CD8-positive, alpha-beta memory T cell (primary cell): ENCODE measurements at regions of chr1 and their contacts with region 1.

Region 1: GRCh38 chr1:28248283-28249012 is 10.9 kb upstream of the SESN2 start:
- DNase-seq: peak; percentile 71 to 85 (median 75)
- H3K4me3 ChIP-seq: peak overlapping the region; percentile 76
- H3K4me3 Mint-ChIP-seq: peak overlapping the region; percentile 50 to 89 (median 84)
- H3K27ac ChIP-seq: peak overlapping the region; percentile 88
- H3K27ac Mint-ChIP-seq: peak overlapping the region; percentile 88 to 99 (median 95)
- H3K4me1 ChIP-seq: peaks cover 54% of the 10 kb centered on the region
- H3K4me1 Mint-ChIP-seq: peaks cover 43 to 53% (median 51%) of the 10 kb centered on the region in 3 donors
- H3K27me3 ChIP-seq: no peaks in the 10 kb centered on the region
- H3K27me3 Mint-ChIP-seq: no peaks in the 10 kb centered on the region

Region 2: DNA sequence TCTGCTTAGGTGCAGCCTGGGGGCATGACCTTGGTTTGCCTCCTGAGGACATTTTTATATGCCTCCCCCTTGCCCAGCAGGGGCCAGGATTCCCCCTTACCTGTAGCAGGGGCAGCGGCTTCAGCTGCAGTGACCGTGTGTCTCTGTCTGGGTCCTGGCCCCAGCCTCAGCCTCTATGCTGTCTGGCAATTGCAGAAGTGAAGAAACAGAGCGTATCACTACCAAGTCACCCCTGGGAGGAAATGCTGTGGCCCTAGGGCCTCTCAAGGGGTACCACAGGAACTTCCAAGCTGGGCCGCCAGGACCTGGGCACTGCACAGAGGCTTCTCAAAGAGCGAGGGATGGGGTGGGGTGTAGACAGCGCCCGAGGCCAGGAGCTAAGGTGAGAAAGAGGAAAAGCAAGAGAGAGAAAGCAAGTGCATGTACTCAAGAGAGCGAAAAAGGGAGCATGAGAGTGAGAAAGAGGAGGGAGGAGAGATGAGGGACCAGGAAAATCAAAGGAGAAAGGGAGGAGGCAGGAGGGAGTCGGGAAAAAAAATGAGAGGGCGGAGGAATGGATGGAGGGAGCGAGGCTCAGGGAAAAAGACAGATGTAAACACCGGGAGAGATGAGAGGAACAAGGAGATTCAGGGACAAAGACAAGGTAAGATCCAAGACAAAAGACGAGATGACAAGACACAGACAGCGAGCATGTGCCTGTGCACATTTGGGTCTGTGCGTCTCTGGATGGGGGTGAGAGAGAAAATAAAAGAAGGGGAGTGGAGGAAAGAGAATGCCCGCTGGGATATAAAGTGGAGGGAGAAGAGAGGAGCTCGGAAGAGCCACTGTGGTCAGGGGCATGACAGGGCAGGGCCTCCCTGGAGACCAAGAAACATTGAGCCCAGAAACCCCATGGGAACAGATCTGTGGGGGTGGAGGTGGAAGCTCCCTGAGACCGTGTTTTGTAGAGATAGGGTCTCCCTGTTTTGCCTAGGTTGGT is 71.7 kb before region 1 on chr1 and contains the start of gene PTAFR:
- CTCF ChIA-PET with region 1: no interaction called
- POLR2A ChIA-PET with region 1: no interaction called
- DNase-seq: no peak
- H3K4me3 ChIP-seq: no peak within 1 kb of the TSS
- H3K4me3 Mint-ChIP-seq: peak within 1 kb of the TSS in 1 of 7 donors; percentile 51
- H3K27ac ChIP-seq: no peak within 1 kb of the TSS
- H3K27ac Mint-ChIP-seq: no peak within 1 kb of the TSS
- H3K4me1 ChIP-seq: peaks cover 26% of the 10 kb centered on the region
- H3K4me1 Mint-ChIP-seq: peaks cover 28 to 40% (median 33%) of the 10 kb centered on the region in 3 donors
- H3K27me3 ChIP-seq: no peaks in the 10 kb centered on the region
- H3K27me3 Mint-ChIP-seq: no peaks in the 10 kb centered on the region
- total RNA-seq, gene PTAFR: 0.58 to 0.59 TPM

Region 3: DNA sequence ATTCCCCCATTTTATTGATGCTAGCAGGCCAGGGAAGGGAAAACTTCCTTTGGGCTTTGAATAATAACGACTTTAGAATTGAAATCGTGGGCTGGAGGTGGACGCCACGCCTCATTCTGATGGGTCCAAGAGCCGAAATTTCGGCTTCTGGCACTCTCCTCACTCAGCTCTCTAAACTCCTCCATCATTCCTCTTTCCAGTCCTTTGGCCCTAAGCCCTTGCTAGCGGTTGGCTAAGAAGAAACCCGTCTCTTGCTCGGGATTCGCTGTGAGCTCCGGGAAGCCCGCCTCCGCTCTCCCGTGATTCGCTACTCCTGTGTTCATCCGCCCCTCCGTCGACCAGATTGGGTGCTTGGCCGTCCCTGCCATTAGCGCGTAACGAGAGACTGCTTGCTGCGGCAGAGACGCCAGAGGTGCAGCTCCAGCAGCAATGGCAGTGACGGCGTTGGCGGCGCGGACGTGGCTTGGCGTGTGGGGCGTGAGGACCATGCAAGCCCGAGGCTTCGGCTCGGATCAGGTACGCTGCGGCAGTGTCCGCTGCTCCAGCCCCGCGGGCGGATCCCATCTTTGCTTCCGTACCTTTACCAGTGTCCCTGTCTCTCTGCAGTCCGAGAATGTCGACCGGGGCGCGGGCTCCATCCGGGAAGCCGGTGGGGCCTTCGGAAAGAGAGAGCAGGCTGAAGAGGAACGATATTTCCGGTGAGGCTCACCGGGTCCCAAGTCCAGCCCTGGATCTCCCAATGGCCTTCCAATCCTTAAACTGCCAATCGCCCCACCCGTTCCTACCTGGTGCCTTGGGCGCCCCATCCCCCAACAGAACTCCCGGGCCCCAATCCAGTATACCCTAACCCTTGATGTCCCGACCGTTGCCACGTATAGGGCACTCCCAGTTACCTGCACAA is 12.4 kb before region 1 on chr1 and contains the start of gene ATP5IF1:
- CTCF ChIA-PET with region 1: interaction called, 38 read pairs
- POLR2A ChIA-PET with region 1: interaction called, 66 read pairs
- DNase-seq: peak; percentile 89 to 96 (median 93)
- H3K4me3 ChIP-seq: peak within 1 kb of the TSS; percentile 55
- H3K4me3 Mint-ChIP-seq: peak within 1 kb of the TSS in 2 of 7 donors; percentile 14 to 66
- H3K27ac ChIP-seq: peak within 1 kb of the TSS; percentile 92
- H3K27ac Mint-ChIP-seq: peak within 1 kb of the TSS in 1 of 8 donors; percentile 17
- H3K4me1 ChIP-seq: peaks cover 33% of the 10 kb centered on the region
- H3K4me1 Mint-ChIP-seq: peaks cover 15 to 34% (median 23%) of the 10 kb centered on the region in 3 donors
- H3K27me3 ChIP-seq: no peaks in the 10 kb centered on the region
- H3K27me3 Mint-ChIP-seq: no peaks in the 10 kb centered on the region
- total RNA-seq, gene ATP5IF1: 135 to 139 TPM

Region 4: GRCh38 chr1:28259307-28260167 is 11.1 kb after region 1 on chr1 and contains the start of gene SESN2:
- CTCF ChIA-PET with region 1: interaction called, 37 read pairs
- POLR2A ChIA-PET with region 1: interaction called, 23 read pairs
- DNase-seq: peak; percentile 98 to 99 (median 99)
- H3K4me3 ChIP-seq: peak within 1 kb of the TSS; percentile 84
- H3K4me3 Mint-ChIP-seq: peak within 1 kb of the TSS; percentile 80 to 88 (median 84)
- H3K27ac ChIP-seq: peak within 1 kb of the TSS; percentile 81
- H3K27ac Mint-ChIP-seq: peak within 1 kb of the TSS; percentile 19 to 85 (median 72)
- H3K4me1 ChIP-seq: peaks cover 50% of the 10 kb centered on the region
- H3K4me1 Mint-ChIP-seq: peaks cover 44 to 56% (median 56%) of the 10 kb centered on the region in 3 donors
- H3K27me3 ChIP-seq: no peaks in the 10 kb centered on the region
- H3K27me3 Mint-ChIP-seq: peaks cover 0 to 1% of the 10 kb centered on the region in 2 donors
- total RNA-seq, gene SESN2: 19.0 to 19.8 TPM

Region 5: DNA sequence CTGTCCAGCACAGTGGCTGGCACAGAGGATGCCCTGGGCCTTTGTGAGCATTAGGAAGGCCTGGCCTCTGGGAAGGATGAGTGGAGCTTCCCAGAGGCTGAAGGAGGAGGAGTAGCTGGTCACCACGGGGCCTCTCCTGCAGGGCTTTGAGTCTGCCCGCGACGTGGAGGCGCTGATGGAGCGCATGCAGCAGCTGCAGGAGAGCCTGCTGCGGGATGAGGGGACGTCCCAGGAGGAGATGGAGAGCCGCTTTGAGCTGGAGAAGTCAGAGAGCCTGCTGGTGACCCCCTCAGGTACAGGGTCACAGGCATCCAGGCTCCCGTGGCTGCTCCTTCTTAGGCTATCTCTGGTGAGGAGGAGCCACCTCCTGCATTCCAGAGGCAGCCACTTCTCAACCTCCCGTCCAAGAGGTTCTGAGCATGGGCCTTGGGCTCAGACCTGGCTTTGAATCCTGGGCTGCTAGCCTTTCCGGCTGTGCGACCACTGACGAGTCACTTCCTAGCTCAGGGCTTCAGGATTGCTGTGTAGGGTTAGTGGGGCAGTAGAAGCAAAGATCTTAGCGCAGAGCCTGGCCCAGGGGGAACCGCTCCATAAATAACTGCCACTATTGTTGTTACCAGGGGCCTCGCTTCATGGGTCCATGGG is 24.9 kb after region 1 on chr1:
- CTCF ChIA-PET with region 1: interaction called, 10 read pairs
- POLR2A ChIA-PET with region 1: no interaction called
- DNase-seq: no peak
- H3K4me3 ChIP-seq: no peak overlapping the region
- H3K4me3 Mint-ChIP-seq: no peak overlapping the region
- H3K27ac ChIP-seq: no peak overlapping the region
- H3K27ac Mint-ChIP-seq: peak overlapping the region in 1 of 8 donors; percentile 14
- H3K4me1 ChIP-seq: no peaks in the 10 kb centered on the region
- H3K4me1 Mint-ChIP-seq: peaks cover 0 to 4% (median 0%) of the 10 kb centered on the region in 3 donors
- H3K27me3 ChIP-seq: no peaks in the 10 kb centered on the region
- H3K27me3 Mint-ChIP-seq: no peaks in the 10 kb centered on the region

Region 6: DNA sequence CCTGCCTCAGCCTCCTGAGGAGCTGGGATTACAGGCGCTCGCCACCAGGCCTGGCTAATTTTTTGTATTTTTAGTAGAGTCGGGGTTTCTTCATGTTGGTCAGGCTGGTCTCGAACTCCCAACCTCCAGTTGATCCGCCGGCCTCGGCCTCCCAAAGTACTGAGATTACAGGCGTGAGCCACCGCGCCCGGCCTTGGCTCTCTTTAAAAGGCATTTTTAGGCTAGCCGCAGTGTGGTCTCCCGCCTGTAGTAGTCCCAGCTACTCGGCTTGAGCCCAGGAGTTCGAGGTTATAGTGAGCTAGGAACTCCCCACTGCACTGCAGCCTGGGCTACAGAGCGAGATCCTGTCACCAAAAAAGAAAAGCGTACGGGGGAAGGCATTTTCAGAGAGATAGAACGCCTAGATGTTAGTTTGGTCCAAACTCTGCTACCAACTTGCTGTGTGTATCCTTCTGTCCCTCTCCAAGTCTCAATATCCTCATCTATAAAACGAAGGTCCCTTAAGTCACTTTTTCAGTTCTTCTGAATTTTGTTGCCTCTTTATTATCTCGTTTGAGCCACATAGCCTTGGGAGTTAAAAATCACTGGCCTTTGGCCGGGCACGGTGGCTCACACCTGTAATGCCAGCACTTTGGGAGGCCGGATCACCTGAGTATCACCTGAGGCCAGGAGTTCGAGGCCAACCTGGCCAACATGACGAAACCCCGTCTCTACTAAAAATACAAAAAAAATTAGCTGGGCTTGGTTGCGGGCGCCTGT is 81.1 kb after region 1 on chr1:
- CTCF ChIA-PET with region 1: interaction called, 30 read pairs
- POLR2A ChIA-PET with region 1: interaction called, 21 read pairs
- DNase-seq: no peak
- H3K4me3 ChIP-seq: peak overlapping the region; percentile 85
- H3K4me3 Mint-ChIP-seq: peak overlapping the region; percentile 89 to 97 (median 91)
- H3K27ac ChIP-seq: peak overlapping the region; percentile 93
- H3K27ac Mint-ChIP-seq: peak overlapping the region; percentile 95 to 99 (median 98)
- H3K4me1 ChIP-seq: peaks cover 17% of the 10 kb centered on the region
- H3K4me1 Mint-ChIP-seq: peaks cover 26 to 42% (median 42%) of the 10 kb centered on the region in 3 donors
- H3K27me3 ChIP-seq: no peaks in the 10 kb centered on the region
- H3K27me3 Mint-ChIP-seq: peaks cover 0 to 5% of the 10 kb centered on the region in 2 donors

Region 7: GRCh38 chr1:28359592-28360239 is 111.3 kb after region 1 on chr1:
- CTCF ChIA-PET with region 1: interaction called, 24 read pairs
- POLR2A ChIA-PET with region 1: interaction called, 5 read pairs
- DNase-seq: peak; percentile 48 to 78 (median 60)
- H3K4me3 ChIP-seq: no peak overlapping the region
- H3K4me3 Mint-ChIP-seq: no peak overlapping the region
- H3K27ac ChIP-seq: no peak overlapping the region
- H3K27ac Mint-ChIP-seq: no peak overlapping the region
- H3K4me1 ChIP-seq: no peaks in the 10 kb centered on the region
- H3K4me1 Mint-ChIP-seq: peaks cover 1 to 4% (median 3%) of the 10 kb centered on the region in 3 donors
- H3K27me3 ChIP-seq: no peaks in the 10 kb centered on the region
- H3K27me3 Mint-ChIP-seq: no peaks in the 10 kb centered on the region

Region 8: DNA sequence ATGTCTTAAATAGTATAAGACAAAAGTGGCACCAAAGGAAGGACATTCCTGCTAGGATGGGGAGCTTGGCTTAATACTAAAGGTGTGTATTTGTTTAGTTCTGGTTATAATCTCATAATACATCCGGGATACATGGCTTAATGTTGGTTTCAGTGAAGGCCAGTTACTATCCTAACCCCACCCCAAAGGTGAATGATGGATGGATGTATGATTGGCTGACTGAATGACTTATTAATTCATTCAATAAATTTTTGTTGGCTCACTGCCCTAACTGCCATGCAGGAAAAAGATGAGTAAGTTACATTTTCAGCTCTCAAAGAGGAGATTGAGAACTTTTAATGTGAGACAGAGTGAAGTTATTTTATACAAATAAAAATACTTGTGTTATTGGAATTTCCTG is 173.3 kb after region 1 on chr1:
- CTCF ChIA-PET with region 1: no interaction called
- POLR2A ChIA-PET with region 1: no interaction called
- DNase-seq: no peak
- H3K4me3 ChIP-seq: no peak overlapping the region
- H3K4me3 Mint-ChIP-seq: no peak overlapping the region
- H3K27ac ChIP-seq: no peak overlapping the region
- H3K27ac Mint-ChIP-seq: no peak overlapping the region
- H3K4me1 ChIP-seq: peaks cover 6% of the 10 kb centered on the region
- H3K4me1 Mint-ChIP-seq: peaks cover 11 to 17% (median 15%) of the 10 kb centered on the region in 3 donors
- H3K27me3 ChIP-seq: no peaks in the 10 kb centered on the region
- H3K27me3 Mint-ChIP-seq: no peaks in the 10 kb centered on the region